ENCODE measurements at regions of chr19 and their contacts with region 1.

Region 1: GRCh38 chr19:17623224-17623935 is 64.8 kb downstream of the UNC13A start:
- DNase-seq: no peak
- H3K4me3 ChIP-seq: no peak overlapping the region
- H3K27ac ChIP-seq: no peak overlapping the region
- H3K4me1 ChIP-seq: no peaks in the 10 kb centered on the region
- H3K27me3 ChIP-seq: no peaks in the 10 kb centered on the region
- CTCF ChIP-seq: no peak
- EP300 ChIP-seq: no peak
- POLR2A ChIP-seq: no peak
- RAD21 ChIP-seq: no peak

Region 2: DNA sequence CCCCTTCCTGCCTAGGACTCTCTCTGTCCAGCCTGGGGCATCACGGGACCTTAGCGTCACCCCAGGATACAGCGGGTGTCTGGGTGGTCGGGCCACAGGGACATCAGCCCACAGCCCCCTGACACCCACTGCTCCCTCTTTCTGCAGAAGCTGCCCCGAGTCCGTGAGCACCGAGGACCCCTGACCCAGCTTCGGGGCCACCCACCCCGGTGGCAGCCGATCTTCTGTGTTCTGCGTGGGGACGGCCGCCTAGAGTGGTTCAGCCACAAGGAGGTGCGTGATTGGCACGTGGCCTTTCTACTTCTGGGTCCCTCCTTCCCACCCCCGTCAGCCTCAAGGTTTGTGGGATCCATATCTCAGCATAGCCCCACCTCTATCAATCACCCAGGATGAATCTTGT is 91.3 kb before region 1 on chr19:
- CTCF ChIA-PET with region 1: no interaction called
- POLR2A ChIA-PET with region 1: no interaction called
- DNase-seq: no peak
- H3K4me3 ChIP-seq: no peak overlapping the region
- H3K27ac ChIP-seq: no peak overlapping the region
- H3K4me1 ChIP-seq: peaks cover 0 to 5% (median 2%) of the 10 kb centered on the region in 4 experiments; a peak in 2 of 7 replicates
- H3K27me3 ChIP-seq: peaks cover 0 to 3% (median 0%) of the 10 kb centered on the region in 4 experiments; a peak in 3 of 7 replicates
- CTCF ChIP-seq: no peak
- EP300 ChIP-seq: no peak
- POLR2A ChIP-seq: no peak
- RAD21 ChIP-seq: no peak

Region 3: GRCh38 chr19:17605761-17606745 is 17.3 kb before region 1 on chr19:
- CTCF ChIA-PET with region 1: interaction called, 34 read pairs
- POLR2A ChIA-PET with region 1: interaction called, 5 read pairs
- DNase-seq: peak; percentile 97 to 98
- H3K4me3 ChIP-seq: peak overlapping the region; percentile 8 to 58 (median 46)
- H3K27ac ChIP-seq: peak overlapping the region; percentile 93
- H3K4me1 ChIP-seq: peaks cover 0 to 18% (median 9%) of the 10 kb centered on the region in 4 experiments; a peak in 5 of 7 replicates
- H3K27me3 ChIP-seq: no peaks in the 10 kb centered on the region; a peak in 1 of 7 replicates
- CTCF ChIP-seq: peak; percentile 85 to 90 (median 87)
- EP300 ChIP-seq: no peak
- POLR2A ChIP-seq: peak; percentile 68 to 76
- RAD21 ChIP-seq: peak; percentile 42 to 53; a peak in 3 of 4 replicates

Region 4: DNA sequence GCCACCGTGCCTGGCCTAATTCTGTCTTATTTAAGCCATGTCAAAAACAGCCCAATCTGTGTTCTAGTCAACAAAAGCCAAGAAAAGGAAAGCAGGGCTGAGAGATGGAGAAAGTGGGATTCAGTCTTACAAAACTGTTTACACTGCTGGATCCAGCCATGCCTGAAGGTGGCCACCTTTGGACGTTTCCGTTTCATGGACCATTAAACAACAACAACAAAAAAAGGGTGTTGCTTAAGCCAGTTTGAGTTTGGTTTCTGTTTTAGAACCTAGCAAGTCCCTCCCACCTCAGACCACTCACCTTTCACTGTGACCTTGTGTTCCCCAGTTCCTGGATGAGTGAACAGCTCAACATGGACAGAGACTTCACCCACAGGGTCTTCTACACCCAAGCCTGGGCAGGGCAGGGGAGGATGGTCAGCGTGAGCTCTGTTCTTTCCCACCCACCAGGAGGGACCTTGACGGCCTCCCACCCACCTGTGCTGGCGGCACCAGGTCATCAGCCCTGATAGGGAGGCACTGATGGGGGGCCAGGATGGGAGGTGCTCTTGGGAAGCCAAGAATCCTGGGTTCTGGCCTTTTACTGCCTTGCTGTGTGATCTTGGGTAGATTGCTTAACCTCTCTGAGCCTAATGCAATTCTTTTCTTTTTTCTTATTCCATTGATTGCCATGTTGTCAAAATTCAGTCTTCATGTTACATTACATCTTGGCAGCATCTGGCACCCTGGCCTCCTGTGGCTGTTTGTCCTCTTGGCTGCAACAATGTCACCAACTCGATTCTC is 11.7 kb before region 1 on chr19:
- CTCF ChIA-PET with region 1: interaction called, 34 read pairs
- POLR2A ChIA-PET with region 1: interaction called, 3 read pairs
- DNase-seq: no peak
- H3K4me3 ChIP-seq: no peak overlapping the region
- H3K27ac ChIP-seq: no peak overlapping the region
- H3K4me1 ChIP-seq: peaks cover 0 to 4% (median 2%) of the 10 kb centered on the region in 4 experiments; a peak in 2 of 7 replicates
- H3K27me3 ChIP-seq: no peaks in the 10 kb centered on the region
- CTCF ChIP-seq: no peak
- EP300 ChIP-seq: no peak
- POLR2A ChIP-seq: no peak
- RAD21 ChIP-seq: no peak